ENCODE measurements at regions of chr10 and their contacts with region 1.

Region 1: DNA sequence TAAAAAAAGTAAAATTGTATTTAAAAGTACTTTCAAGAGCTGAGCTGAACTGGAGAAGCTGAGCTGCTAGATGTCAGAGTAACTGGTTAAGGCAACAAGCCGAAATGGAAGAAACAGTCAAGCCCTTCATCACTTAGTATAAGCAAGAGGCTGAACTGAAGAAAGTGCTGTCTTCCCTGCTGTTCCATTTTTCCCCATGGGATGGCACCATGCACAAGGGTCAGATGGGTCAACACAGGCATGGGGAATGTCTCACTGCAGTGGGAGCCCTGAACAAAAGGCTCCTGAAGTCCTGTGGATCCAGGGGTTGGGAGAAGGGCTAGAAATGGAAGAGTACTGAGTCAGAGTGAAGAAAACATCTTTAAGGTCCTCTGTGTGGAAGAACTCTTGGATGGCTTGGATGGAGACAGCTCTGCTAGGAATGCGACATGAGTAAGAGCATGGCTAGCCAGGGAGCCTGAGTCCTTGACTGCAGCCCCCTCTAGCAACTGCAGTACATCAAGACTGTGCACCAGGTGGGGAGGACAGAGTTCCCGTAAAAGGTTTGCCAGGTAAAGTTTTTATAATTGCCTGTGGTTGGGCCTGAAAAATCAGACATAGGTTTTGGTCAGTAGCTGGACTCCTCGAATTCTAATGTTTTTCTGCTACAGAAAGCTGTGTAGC is 348.3 kb downstream of the GPR158 start:
- DNase-seq: peak; percentile 23
- H3K4me3 ChIP-seq: no peak overlapping the region
- H3K27ac ChIP-seq: no peak overlapping the region
- H3K4me1 ChIP-seq: no peaks in the 10 kb centered on the region
- H3K27me3 ChIP-seq: no peaks in the 10 kb centered on the region
- CTCF ChIP-seq: peak in 1 of 2 donors; percentile 43

Region 2: DNA sequence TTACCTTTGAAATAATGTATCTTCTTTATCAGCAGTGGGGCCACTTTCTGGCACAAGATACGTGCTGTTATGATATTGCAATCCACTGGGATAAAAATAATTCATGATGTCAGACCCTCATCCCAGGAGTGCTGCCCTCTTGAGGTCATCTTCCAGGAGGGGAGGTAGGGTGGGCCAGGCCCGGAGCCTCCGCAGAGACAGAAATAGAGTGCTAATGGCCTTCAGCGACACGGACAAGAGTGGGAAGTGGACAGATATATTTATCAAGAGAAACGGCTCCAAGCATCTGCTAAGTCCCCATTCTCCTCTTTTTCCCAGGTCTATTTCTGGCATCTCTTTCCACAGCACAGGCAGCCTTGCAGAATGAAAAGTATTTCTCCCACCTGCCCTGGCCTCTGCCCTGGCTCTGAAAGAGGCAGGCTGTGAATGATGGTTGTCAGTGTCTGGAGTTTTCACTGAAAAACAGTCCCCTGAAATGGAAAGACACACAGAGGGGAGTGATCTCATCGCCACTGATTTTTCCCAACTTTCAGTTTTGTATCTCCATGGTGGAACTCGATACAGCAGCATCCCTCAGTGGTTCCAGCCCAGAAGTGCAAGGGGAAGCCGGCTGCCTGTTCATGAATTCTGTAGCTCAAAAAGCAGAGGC is 159.2 kb after region 1 on chr10:
- CTCF ChIA-PET with region 1: no interaction called
- dilution Hi-C with region 1: no loop called
- in situ Hi-C with region 1: no loop called
- intact Hi-C with region 1: loop called (anchors 5 kb)
- DNase-seq: peak; percentile 2
- H3K4me3 ChIP-seq: no peak overlapping the region
- H3K27ac ChIP-seq: no peak overlapping the region
- H3K4me1 ChIP-seq: no peaks in the 10 kb centered on the region
- H3K27me3 ChIP-seq: no peaks in the 10 kb centered on the region
- CTCF ChIP-seq: peak in 1 of 2 donors; percentile 51

Region 3: GRCh38 chr10:25713894-25714240 is 190.8 kb after region 1 on chr10:
- CTCF ChIA-PET with region 1: no interaction called
- dilution Hi-C with region 1: no loop called
- in situ Hi-C with region 1: no loop called
- intact Hi-C with region 1: loop called (anchors 5 kb)
- DNase-seq: no peak
- H3K4me3 ChIP-seq: no peak overlapping the region
- H3K27ac ChIP-seq: no peak overlapping the region
- H3K4me1 ChIP-seq: no peaks in the 10 kb centered on the region
- H3K27me3 ChIP-seq: no peaks in the 10 kb centered on the region
- CTCF ChIP-seq: no peak